Activated CD4-positive, alpha-beta T cell treated with anti-CD3 and anti-CD28 coated beads for 36 hours (primary cell): ENCODE measurements at regions of chr10 and their contacts with region 1.

Region 1: GRCh38 chr10:2949948-2950354 is 117.4 kb upstream of the PFKP start:
- DNase-seq: peak; percentile 84
- ATAC-seq: peak; percentile 83
- H3K4me3 Mint-ChIP-seq: no peak overlapping the region
- H3K27ac Mint-ChIP-seq: peak overlapping the region; percentile 83
- H3K4me1 Mint-ChIP-seq: peaks cover 42% of the 10 kb centered on the region
- H3K27me3 Mint-ChIP-seq: peaks cover 33% of the 10 kb centered on the region

Region 2: DNA sequence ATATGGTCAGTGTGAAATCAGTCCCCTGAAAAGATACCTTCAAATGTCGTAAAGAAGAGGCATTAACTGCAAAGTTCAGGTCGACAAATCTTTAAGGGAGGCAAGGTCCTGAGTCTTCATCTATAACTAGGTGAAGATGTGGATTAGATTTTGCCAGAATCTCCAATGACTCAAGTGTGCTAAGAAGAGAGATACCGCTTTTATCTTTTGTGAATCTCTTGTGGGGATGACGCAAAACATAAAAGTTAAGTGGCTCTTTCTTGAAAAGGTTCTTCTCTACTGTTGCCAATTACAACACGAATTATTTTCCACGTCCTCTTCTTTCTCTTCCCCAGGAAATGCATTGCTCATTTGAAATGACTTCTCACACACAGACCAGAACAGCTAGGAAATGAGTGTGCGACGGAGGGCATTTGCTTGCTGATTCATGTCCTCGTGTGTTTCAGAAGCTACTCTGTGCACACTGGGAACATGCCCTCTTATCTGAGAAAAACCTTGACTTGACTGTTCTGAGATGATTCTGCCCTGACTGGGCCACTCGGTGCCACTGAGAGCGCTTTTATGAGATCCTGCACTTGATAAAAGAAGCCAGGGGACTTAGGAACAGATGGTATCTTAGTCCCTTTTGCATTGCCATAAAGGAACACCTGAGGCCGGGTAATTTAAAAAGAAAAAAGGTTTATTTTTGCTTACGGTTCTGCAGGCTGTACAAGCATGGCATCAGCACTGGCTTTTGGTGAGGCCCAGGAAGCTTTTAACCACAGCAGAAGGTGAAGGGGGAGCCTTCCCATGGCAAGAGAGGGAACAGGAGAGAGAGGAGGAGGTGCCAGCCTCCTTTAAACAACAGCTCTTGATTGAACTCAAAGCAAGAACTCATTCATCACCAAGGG is 52.1 kb before region 1 on chr10:
- CTCF ChIA-PET with region 1: interaction called, 3 read pairs
- POLR2A ChIA-PET with region 1: interaction called, 3 read pairs
- intact Hi-C with region 1: loop called in 1 of 2 experiments (anchors 1 kb)
- DNase-seq: peak; percentile 53
- ATAC-seq: peak; percentile 96
- H3K4me3 Mint-ChIP-seq: no peak overlapping the region
- H3K27ac Mint-ChIP-seq: peak overlapping the region; percentile 49
- H3K4me1 Mint-ChIP-seq: peaks cover 15% of the 10 kb centered on the region
- H3K27me3 Mint-ChIP-seq: peaks cover 7% of the 10 kb centered on the region

Region 3: DNA sequence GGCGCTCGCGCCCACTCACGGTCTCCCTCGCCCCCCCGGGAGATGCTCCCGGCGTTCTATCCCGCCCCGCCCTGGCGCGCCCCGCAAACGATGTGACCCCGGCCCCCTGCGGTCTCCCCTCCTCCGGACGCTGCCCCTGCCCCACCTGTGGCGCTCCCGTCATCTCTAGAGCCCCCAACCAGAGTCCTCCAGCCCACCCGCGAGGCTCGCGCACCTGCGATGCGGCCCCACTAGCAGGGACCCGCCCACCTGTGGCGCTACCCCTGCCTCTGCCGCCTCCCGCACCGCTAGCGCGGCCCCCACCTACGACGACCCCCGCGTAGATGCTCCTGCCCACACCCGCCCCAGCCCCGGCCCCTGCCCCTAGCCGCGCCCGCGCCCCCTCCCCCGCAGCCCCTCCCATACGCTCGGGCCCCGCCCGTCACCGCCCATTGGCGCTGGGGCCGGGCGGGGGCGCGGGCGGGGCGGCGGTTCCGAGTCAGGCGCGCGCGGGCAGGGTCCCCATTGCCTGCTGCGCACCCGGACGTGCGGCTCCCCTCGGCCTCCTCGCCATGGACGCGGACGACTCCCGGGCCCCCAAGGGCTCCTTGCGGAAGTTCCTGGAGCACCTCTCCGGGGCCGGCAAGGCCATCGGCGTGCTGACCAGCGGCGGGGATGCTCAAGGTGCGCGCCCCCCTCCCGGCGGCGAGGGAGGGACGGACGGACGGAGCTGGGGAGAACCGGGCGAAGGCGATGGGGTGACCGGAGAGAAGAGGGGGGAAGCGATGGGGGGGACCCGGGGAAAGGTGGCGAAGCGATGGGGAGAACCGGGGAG is 117.3 kb after region 1 on chr10 and contains the start of gene PFKP:
- CTCF ChIA-PET with region 1: no interaction called
- POLR2A ChIA-PET with region 1: no interaction called
- intact Hi-C with region 1: loop called in 1 of 2 experiments (anchors 1 kb)
- DNase-seq: peak; percentile 83
- ATAC-seq: peak; percentile 66
- H3K4me3 Mint-ChIP-seq: peak within 1 kb of the TSS; percentile 83
- H3K27ac Mint-ChIP-seq: peak within 1 kb of the TSS; percentile 89
- H3K4me1 Mint-ChIP-seq: peaks cover 31% of the 10 kb centered on the region
- H3K27me3 Mint-ChIP-seq: peaks cover 5% of the 10 kb centered on the region
- total RNA-seq, gene PFKP: 231 to 239 TPM

Region 4: DNA sequence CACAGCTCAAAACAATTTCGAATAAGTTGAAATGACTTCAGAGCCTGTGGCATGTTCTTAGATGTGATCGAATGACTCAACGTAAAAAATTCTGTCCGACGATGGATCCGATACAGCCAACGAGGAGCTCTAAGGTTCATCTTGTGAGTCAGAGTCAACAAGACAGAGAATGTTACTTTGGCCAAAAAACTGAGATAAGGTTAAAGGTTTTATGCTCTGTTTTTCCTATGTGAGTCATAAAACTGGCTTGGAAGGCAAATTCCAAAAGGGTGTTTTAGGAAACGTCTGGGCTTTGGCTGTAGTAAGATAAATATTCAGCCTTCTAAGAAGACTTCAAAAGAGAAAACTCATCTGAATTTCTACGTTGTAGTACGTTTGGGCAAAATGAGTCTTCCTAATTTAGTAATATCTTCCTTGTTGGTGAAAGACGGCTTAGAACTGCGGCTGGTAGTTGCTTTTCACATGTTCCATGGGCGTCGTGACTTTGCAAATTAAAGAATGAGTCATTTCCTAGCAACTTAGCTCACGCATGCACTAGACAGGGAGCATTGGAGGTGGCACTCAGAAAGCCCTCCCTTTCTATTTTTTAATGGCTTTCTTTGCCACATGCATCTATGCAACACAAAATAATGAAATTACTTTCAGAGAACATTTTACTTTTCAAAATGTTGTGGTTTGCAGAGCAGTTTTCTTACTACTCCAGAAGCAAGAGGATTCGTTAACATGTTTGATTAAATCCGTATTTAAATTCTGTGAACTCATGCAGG is 145.6 kb after region 1 on chr10:
- CTCF ChIA-PET with region 1: no interaction called
- POLR2A ChIA-PET with region 1: interaction called, 4 read pairs
- intact Hi-C with region 1: loop called in 1 of 2 experiments (anchors 1 kb)
- DNase-seq: peak; percentile 80
- ATAC-seq: peak; percentile 86
- H3K4me3 Mint-ChIP-seq: peak overlapping the region; percentile 15
- H3K27ac Mint-ChIP-seq: peak overlapping the region; percentile 83
- H3K4me1 Mint-ChIP-seq: peaks cover 55% of the 10 kb centered on the region
- H3K27me3 Mint-ChIP-seq: no peaks in the 10 kb centered on the region

Region 5: DNA sequence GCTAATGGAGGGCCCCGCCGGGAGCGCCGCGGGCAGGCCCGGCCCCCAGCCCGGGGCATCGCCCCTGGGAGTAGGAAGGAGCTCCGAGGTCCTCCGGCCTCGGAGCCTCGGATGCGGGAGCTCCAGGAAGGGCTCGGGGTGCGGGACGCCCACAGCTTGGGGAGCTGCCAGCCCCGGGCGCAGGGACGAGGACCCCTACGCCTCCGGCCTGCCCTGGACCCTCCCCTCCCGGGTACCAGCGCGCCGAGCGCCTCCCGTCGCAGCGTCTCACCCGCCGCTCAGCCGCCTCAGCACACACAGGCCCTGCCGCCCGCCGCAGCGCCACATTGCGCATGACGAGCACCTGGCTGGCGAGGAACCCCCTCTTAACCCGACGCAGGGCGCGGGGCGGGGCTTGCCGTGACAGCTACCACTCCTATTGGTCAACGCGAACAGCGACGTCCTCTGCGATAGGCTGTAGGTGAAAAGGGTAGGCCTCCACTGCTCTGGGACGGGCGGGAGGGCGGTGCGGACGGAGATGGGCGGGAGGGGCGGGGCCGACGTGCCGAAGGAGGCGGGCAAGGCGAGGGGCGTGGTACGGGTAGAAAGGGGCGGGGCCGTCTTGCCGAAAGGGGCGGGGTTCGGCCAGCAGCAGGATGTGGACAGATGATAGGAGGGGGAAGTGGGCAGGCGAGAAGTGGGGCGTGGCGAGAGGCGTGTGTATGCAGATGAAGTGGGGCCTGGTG is 222.7 kb after region 1 on chr10 and contains the start of gene PITRM1:
- CTCF ChIA-PET with region 1: no interaction called
- POLR2A ChIA-PET with region 1: no interaction called
- intact Hi-C with region 1: loop called in 1 of 2 experiments (anchors 10 kb)
- DNase-seq: peak; percentile 99
- ATAC-seq: peak; percentile 97
- H3K4me3 Mint-ChIP-seq: peak within 1 kb of the TSS; percentile 78
- H3K27ac Mint-ChIP-seq: peak within 1 kb of the TSS; percentile 91
- H3K4me1 Mint-ChIP-seq: peaks cover 23% of the 10 kb centered on the region
- H3K27me3 Mint-ChIP-seq: no peaks in the 10 kb centered on the region
- total RNA-seq, gene PITRM1: 84.8 to 97.9 TPM